Activated CD8-positive, alpha-beta T cell treated with anti-CD3 and anti-CD28 coated beads for 36 hours (primary cell): ENCODE measurements at regions of chr20 and their contacts with region 1.

Region 1: DNA sequence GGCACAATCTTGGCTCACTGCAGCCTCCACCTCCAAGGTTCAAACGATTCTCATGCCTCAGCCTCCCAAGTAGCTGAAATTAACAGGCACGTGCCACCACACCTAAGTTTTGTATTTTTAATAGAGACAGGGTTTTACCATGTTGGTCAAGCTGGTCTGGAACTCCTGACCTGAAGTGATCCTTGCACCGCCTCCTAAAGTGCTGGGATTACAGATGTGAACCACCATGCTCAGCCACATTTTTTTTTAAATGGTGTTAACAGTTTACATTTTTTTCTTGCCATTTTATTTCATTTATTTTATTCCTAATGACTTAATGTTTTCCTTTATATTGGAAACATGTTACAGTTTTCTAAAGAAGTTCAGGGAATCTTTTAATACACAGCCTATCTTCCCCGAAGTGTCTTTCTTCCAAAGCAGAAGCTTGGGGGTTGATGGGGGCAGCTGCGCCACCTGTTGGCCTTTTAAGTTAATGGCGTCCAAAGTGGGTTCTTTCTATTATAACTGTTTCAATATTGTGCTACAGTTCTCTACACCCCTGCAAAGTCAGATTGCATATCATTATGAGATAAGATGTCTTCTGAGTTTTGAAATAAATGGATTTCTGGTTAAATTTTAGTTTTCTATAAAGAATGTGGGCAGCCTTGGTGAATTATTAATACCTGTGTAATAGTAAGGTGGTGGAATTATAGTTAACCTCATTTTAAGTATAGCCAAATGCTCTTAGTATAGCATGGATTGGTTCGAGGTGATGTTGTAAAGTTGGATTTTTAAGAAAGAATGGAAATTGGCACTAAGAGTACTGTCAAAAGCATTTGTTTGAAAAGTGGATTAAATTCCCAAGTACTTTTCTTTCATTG is 42.0 kb upstream of the PLCG1 start:
- DNase-seq: peak; percentile 70
- ATAC-seq: peak; percentile 73
- H3K4me3 Mint-ChIP-seq: no peak overlapping the region
- H3K27ac Mint-ChIP-seq: no peak overlapping the region
- H3K4me1 Mint-ChIP-seq: peaks cover 2% of the 10 kb centered on the region
- H3K27me3 Mint-ChIP-seq: no peaks in the 10 kb centered on the region
- CTCF ChIP-seq: peak; percentile 97

Region 2: GRCh38 chr20:40962730-40963504 is 132.4 kb before region 1 on chr20:
- CTCF ChIA-PET with region 1: interaction called, 49 read pairs
- POLR2A ChIA-PET with region 1: interaction called, 3 read pairs
- intact Hi-C with region 1: loop called (anchors 1 kb)
- DNase-seq: peak; percentile 78
- ATAC-seq: peak; percentile 89
- H3K4me3 Mint-ChIP-seq: no peak overlapping the region
- H3K27ac Mint-ChIP-seq: no peak overlapping the region
- H3K4me1 Mint-ChIP-seq: peaks cover 8% of the 10 kb centered on the region
- H3K27me3 Mint-ChIP-seq: no peaks in the 10 kb centered on the region
- CTCF ChIP-seq: peak; percentile 96

Region 3: GRCh38 chr20:40970201-40970600 is 125.1 kb before region 1 on chr20:
- CTCF ChIA-PET with region 1: interaction called, 49 read pairs
- POLR2A ChIA-PET with region 1: interaction called, 3 read pairs
- intact Hi-C with region 1: loop called (anchors 1 kb)
- DNase-seq: no peak
- ATAC-seq: no peak
- H3K4me3 Mint-ChIP-seq: no peak overlapping the region
- H3K27ac Mint-ChIP-seq: no peak overlapping the region
- H3K4me1 Mint-ChIP-seq: peaks cover 11% of the 10 kb centered on the region
- H3K27me3 Mint-ChIP-seq: peaks cover 8% of the 10 kb centered on the region
- CTCF ChIP-seq: no peak

Region 4: DNA sequence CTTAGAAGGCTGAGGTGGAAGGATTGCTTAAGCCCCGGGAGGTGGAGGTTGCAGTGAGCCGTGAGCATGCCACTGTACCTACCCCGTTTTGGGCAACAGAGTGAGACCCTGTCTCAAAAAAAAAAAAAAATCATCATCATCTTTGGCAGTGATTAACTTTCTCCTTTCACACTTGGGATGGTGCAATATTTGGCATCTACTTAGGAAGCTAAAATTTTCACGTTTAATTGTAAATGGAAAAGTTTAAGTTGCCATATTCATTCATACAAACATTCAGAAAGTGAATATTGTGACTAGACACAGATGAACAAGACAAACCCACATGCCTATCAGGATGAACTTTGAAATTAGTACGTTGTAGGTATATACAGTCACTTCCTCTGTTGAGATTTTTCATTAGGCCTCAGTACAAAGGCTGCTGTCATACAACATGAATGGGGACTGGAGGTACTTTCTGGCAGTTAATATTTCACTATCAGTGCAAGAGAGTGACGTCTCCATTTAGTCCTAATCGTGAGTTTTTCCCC is 56.4 kb before region 1 on chr20:
- CTCF ChIA-PET with region 1: interaction called, 13 read pairs
- POLR2A ChIA-PET with region 1: interaction called, 5 read pairs
- intact Hi-C with region 1: no loop called
- DNase-seq: no peak
- ATAC-seq: peak; percentile 80
- H3K4me3 Mint-ChIP-seq: no peak overlapping the region
- H3K27ac Mint-ChIP-seq: peak overlapping the region; percentile 74
- H3K4me1 Mint-ChIP-seq: peaks cover 83% of the 10 kb centered on the region
- H3K27me3 Mint-ChIP-seq: no peaks in the 10 kb centered on the region
- CTCF ChIP-seq: no peak

Region 5: DNA sequence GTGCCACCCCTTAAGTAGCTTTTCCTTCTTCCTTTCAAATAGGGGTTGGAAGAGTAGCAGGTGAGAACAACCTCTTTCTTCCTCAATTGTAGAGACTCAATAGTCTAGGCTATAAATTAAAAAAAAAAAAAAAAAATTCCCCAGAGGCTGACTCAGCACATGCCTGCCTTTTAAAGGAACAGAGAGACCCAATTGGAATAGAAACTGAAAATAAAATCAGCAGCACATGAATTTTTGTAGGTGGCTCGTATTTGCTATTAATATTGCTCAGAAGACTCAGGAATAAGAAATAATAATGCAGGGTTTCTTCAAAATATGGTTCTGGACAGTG is 47.4 kb before region 1 on chr20:
- CTCF ChIA-PET with region 1: interaction called, 10 read pairs
- POLR2A ChIA-PET with region 1: no interaction called
- intact Hi-C with region 1: no loop called
- DNase-seq: no peak
- ATAC-seq: peak; percentile 52
- H3K4me3 Mint-ChIP-seq: peak overlapping the region; percentile 79
- H3K27ac Mint-ChIP-seq: peak overlapping the region; percentile 87
- H3K4me1 Mint-ChIP-seq: peaks cover 86% of the 10 kb centered on the region
- H3K27me3 Mint-ChIP-seq: no peaks in the 10 kb centered on the region
- CTCF ChIP-seq: no peak

Region 6: DNA sequence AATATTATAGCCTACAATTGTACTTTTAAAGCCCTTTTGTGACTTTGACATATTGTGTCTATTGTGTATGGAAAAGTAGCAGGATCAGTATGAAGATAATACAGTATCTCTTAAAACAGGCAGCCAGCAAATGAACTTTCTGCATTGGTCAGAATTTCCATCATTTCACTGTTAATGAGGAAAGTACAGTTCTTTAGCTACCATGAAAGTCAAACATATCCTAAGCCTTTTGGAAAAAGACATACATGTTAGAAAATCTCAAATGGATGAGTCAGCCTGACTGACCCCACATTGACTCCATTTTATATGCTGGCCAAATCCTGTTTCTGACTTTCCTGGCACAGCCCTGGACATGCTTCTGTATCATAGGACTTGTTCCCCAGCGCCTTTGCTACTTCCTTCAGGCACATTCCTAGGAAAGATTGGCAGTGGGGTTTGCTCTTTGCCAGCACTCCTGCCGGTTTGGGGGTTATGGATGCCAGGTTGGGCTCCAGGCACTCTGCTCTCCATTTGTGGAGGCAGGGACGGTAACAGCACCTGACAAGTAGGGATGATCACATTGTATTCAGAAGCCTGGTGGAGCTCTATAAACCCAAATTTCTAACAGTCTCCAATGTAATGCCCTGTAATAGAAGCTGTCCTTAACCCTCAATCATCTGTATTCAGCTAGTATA is 23.0 kb before region 1 on chr20:
- CTCF ChIA-PET with region 1: interaction called, 14 read pairs
- POLR2A ChIA-PET with region 1: interaction called, 4 read pairs
- intact Hi-C with region 1: no loop called
- DNase-seq: no peak
- ATAC-seq: peak; percentile 27
- H3K4me3 Mint-ChIP-seq: no peak overlapping the region
- H3K27ac Mint-ChIP-seq: peak overlapping the region; percentile 55
- H3K4me1 Mint-ChIP-seq: peaks cover 68% of the 10 kb centered on the region
- H3K27me3 Mint-ChIP-seq: no peaks in the 10 kb centered on the region
- CTCF ChIP-seq: no peak

Region 7: DNA sequence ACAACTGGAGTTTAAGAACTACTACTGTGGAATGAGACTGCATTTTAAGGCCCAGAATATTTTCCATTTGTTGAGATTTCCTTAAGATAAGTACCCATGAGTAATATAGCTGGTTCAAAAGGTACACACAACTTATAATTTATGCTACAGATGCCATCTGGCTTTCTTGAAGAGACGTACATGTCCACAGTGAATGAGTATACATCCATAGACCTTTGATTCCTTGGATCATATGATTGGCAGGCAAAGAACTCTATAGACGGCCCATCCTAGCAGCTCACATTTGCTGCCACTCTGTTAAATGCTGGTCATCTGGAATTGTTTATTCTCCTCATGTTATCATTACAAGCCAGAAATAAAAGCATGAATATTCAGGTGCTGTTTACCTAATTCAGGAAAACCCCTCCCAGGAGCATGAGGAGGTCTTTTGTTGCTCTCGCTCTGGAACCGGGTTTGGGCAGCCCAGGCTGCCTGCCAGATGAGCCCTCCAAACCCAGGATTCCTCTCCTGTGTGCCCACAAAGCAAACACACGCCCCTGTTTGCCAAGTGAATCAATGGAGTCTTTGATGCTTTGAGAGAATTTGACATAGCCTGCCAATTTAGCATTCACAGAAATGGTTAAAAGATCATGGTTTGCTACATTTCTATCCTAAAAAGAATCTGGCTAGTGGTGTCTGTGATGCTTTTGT is 24.4 kb after region 1 on chr20:
- CTCF ChIA-PET with region 1: interaction called, 10 read pairs
- POLR2A ChIA-PET with region 1: no interaction called
- intact Hi-C with region 1: no loop called
- DNase-seq: no peak
- ATAC-seq: no peak
- H3K4me3 Mint-ChIP-seq: no peak overlapping the region
- H3K27ac Mint-ChIP-seq: peak overlapping the region; percentile 28
- H3K4me1 Mint-ChIP-seq: peaks cover 4% of the 10 kb centered on the region
- H3K27me3 Mint-ChIP-seq: no peaks in the 10 kb centered on the region
- CTCF ChIP-seq: no peak